ENCODE measurements at regions of chr4 and their contacts with region 1.

Region 1: DNA sequence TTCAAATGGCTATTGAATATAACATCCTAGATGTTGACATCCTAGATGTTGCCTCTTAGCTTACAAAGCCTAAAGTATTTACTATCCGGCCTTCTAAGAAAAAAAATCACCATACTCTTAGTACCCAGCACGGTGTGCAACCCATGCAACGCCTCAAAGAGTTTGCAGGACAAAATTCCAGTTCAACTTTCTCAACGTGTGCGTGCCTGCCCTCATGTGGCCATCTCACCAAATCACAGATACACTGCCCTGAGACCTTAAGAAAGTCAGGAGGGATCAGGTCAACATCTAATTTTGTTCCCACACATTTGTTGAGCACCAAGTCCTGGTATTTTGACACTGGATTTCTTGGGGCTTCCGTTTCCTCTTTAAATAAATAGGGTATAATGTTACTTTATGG is 68.3 kb downstream of the CRMP1 start:
- DNase-seq: peak; percentile 51
- ATAC-seq: peak; percentile 79
- H3K4me3 ChIP-seq: no peak overlapping the region
- H3K27ac ChIP-seq: no peak overlapping the region
- H3K4me1 ChIP-seq: no peaks in the 10 kb centered on the region
- H3K27me3 ChIP-seq: no peaks in the 10 kb centered on the region
- CTCF ChIP-seq: peak; percentile 46
- POLR2A ChIP-seq: no peak
- RAD21 ChIP-seq: peak; percentile 44

Region 2: GRCh38 chr4:5381961-5382441 is 442.6 kb before region 1 on chr4:
- CTCF ChIA-PET with region 1: no interaction called
- POLR2A ChIA-PET with region 1: no interaction called
- dilution Hi-C with region 1: no loop called
- in situ Hi-C with region 1: no loop called
- intact Hi-C with region 1: loop called (anchors 10 kb)
- DNase-seq: peak; percentile 94
- ATAC-seq: peak; percentile 70
- H3K4me3 ChIP-seq: no peak overlapping the region
- H3K27ac ChIP-seq: peak overlapping the region; percentile 86
- H3K4me1 ChIP-seq: peaks cover 29% of the 10 kb centered on the region
- H3K27me3 ChIP-seq: no peaks in the 10 kb centered on the region
- CTCF ChIP-seq: no peak
- POLR2A ChIP-seq: 0 out of 2 replicates have a peak, but pooled peaks have one; percentile 11
- RAD21 ChIP-seq: no peak

Region 3: GRCh38 chr4:5863461-5864113 is 39.0 kb after region 1 on chr4:
- CTCF ChIA-PET with region 1: no interaction called
- POLR2A ChIA-PET with region 1: no interaction called
- dilution Hi-C with region 1: no loop called
- in situ Hi-C with region 1: no loop called
- intact Hi-C with region 1: no loop called
- DNase-seq: peak; percentile 96
- ATAC-seq: peak; percentile 93
- H3K4me3 ChIP-seq: no peak overlapping the region
- H3K27ac ChIP-seq: no peak overlapping the region
- H3K4me1 ChIP-seq: peaks cover 6% of the 10 kb centered on the region; the same call in 1 of the 2 replicates
- H3K27me3 ChIP-seq: no peaks in the 10 kb centered on the region
- CTCF ChIP-seq: no peak
- POLR2A ChIP-seq: no peak
- RAD21 ChIP-seq: no peak

Region 4: GRCh38 chr4:6076391-6076790 is 251.8 kb after region 1 on chr4:
- CTCF ChIA-PET with region 1: no interaction called
- POLR2A ChIA-PET with region 1: no interaction called
- dilution Hi-C with region 1: no loop called
- in situ Hi-C with region 1: no loop called
- intact Hi-C with region 1: no loop called
- DNase-seq: no peak
- ATAC-seq: no peak
- H3K4me3 ChIP-seq: no peak overlapping the region
- H3K27ac ChIP-seq: no peak overlapping the region
- H3K4me1 ChIP-seq: no peaks in the 10 kb centered on the region
- H3K27me3 ChIP-seq: no peaks in the 10 kb centered on the region
- CTCF ChIP-seq: no peak
- POLR2A ChIP-seq: no peak
- RAD21 ChIP-seq: no peak

Region 5: DNA sequence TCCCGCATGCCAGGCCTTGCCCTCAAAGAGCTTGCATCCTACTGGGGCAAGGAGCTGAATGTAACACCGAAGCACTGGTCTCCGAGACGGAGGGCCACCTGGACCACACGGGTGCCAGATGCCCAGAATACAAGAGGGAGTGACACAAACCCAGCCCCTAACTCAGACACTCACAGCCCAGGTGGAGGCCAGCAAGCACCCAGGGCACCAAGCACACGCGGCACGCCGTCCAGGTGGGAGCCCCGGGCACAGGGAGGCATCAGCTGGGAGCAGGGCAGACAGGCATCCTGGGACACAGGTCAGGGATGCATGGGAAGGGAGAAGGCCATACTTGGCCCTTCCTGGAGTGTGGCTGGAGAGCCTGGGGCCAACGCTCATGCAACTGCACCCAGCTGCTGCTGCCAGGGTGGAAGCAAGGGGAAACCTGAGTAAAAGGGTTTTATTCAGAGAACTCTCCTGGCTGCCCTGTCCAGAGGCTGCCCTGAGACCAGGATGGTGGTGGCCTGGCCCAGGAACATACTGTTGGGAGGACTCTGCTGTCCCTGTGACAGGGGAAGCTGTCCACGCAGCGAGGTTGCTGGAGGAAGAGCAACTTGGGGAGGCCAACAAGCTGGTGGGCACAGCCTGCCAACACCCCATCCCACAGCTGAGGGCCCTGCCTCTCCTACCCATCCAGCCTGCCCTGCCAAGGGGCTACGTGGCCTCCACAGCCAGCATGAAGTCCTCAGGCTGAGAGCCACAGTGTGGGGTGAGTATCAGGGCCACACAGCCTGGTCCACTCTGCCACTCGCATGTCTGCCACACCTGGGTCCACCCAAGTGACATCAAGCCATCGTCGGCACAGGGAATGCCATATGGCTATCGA is 670.0 kb after region 1 on chr4:
- CTCF ChIA-PET with region 1: no interaction called
- POLR2A ChIA-PET with region 1: interaction called, 16 read pairs
- dilution Hi-C with region 1: no loop called
- in situ Hi-C with region 1: no loop called
- intact Hi-C with region 1: no loop called
- DNase-seq: no peak
- ATAC-seq: no peak
- H3K4me3 ChIP-seq: no peak overlapping the region
- H3K27ac ChIP-seq: no peak overlapping the region
- H3K4me1 ChIP-seq: no peaks in the 10 kb centered on the region
- H3K27me3 ChIP-seq: peaks cover 5% of the 10 kb centered on the region; the same call in 1 of the 2 replicates
- CTCF ChIP-seq: no peak
- POLR2A ChIP-seq: no peak
- RAD21 ChIP-seq: no peak